Sigmoid colon (tissue), 7 donors: ENCODE measurements at regions of chr2 and their contacts with region 1.

Region 1: GRCh38 chr2:69306822-69307578 is 80.0 kb downstream of the GFPT1 start:
- DNase-seq: peak; percentile 93
- H3K4me3 ChIP-seq: peak overlapping the region; percentile 46 to 64 (median 60)
- H3K27ac ChIP-seq: peak overlapping the region; percentile 80 to 90 (median 84)
- H3K4me1 ChIP-seq: peaks cover 0 to 65% (median 50%) of the 10 kb centered on the region in 4 donors
- H3K27me3 ChIP-seq: no peaks in the 10 kb centered on the region
- CTCF ChIP-seq: peak; percentile 69 to 93 (median 82)
- EP300 ChIP-seq: no peak
- POLR2A ChIP-seq: no peak

Region 2: GRCh38 chr2:69012310-69013141 is 294.5 kb before region 1 on chr2:
- intact Hi-C with region 1: loop called (anchors 1 kb)
- DNase-seq: peak; percentile 84
- H3K4me3 ChIP-seq: peak overlapping the region; percentile 71 to 94 (median 88)
- H3K27ac ChIP-seq: peak overlapping the region; percentile 80 to 94 (median 92)
- H3K4me1 ChIP-seq: peaks cover 0 to 46% (median 29%) of the 10 kb centered on the region in 4 donors
- H3K27me3 ChIP-seq: no peaks in the 10 kb centered on the region
- CTCF ChIP-seq: peak; percentile 71 to 93 (median 84)
- EP300 ChIP-seq: no peak
- POLR2A ChIP-seq: no peak

Region 3: GRCh38 chr2:69033461-69034095 is 273.4 kb before region 1 on chr2:
- intact Hi-C with region 1: no loop called
- DNase-seq: no peak
- H3K4me3 ChIP-seq: no peak overlapping the region
- H3K27ac ChIP-seq: peak overlapping the region in 1 of 4 donors; percentile 14
- H3K4me1 ChIP-seq: peaks cover 0 to 31% (median 17%) of the 10 kb centered on the region in 4 donors
- H3K27me3 ChIP-seq: no peaks in the 10 kb centered on the region
- CTCF ChIP-seq: no peak
- EP300 ChIP-seq: no peak
- POLR2A ChIP-seq: no peak

Region 4: DNA sequence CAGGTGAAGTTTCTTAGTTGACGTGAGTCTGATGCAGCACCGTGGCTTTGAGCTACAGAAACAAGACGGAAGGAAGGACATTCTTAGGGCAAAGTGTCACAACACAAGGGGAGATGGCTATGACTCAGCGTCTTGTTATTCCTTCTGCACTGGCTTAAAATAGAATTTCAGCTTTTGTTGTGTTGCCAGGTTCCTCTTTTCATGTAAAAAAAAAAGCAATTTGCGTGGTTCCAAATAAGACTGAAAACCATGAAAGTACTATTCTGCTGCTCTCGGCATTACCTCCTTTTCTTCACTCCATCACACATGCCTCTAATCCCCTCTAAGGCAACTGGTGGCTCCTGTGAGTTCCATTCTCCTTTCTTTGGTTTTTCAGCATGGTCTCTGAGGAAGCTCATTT is 143.9 kb before region 1 on chr2:
- intact Hi-C with region 1: loop called (anchors 5 kb)
- DNase-seq: no peak
- H3K4me3 ChIP-seq: no peak overlapping the region
- H3K27ac ChIP-seq: peak overlapping the region in 3 of 4 donors; percentile 66 to 82 (median 76)
- H3K4me1 ChIP-seq: peaks cover 0 to 61% (median 36%) of the 10 kb centered on the region in 4 donors
- H3K27me3 ChIP-seq: no peaks in the 10 kb centered on the region
- CTCF ChIP-seq: no peak
- EP300 ChIP-seq: peak in 1 of 4 donors; percentile 57
- POLR2A ChIP-seq: no peak

Region 5: GRCh38 chr2:69253611-69254288 is 53.2 kb before region 1 on chr2:
- intact Hi-C with region 1: loop called (anchors 5 kb)
- DNase-seq: peak; percentile 82
- H3K4me3 ChIP-seq: no peak overlapping the region
- H3K27ac ChIP-seq: peak overlapping the region; percentile 16 to 66 (median 60)
- H3K4me1 ChIP-seq: peaks cover 0 to 34% (median 25%) of the 10 kb centered on the region in 4 donors
- H3K27me3 ChIP-seq: no peaks in the 10 kb centered on the region
- CTCF ChIP-seq: no peak
- EP300 ChIP-seq: no peak
- POLR2A ChIP-seq: no peak